ENCODE measurements at regions of chr6 and their contacts with region 1.

Region 1: GRCh38 chr6:135145063-135145800 is 35.9 kb upstream of the MYB start:
- DNase-seq: no peak
- H3K4me3 Mint-ChIP-seq: peak overlapping the region; percentile 55
- H3K27ac Mint-ChIP-seq: peak overlapping the region; percentile 83
- H3K4me1 Mint-ChIP-seq: peaks cover 80% of the 10 kb centered on the region
- H3K27me3 Mint-ChIP-seq: no peaks in the 10 kb centered on the region

Region 2: GRCh38 chr6:135088818-135089809 is 56.1 kb before region 1 on chr6:
- intact Hi-C with region 1: loop called (anchors 1 kb)
- DNase-seq: peak; percentile 58
- H3K4me3 Mint-ChIP-seq: peak overlapping the region; percentile 57
- H3K27ac Mint-ChIP-seq: peak overlapping the region; percentile 93
- H3K4me1 Mint-ChIP-seq: peaks cover 89% of the 10 kb centered on the region
- H3K27me3 Mint-ChIP-seq: no peaks in the 10 kb centered on the region

Region 3: DNA sequence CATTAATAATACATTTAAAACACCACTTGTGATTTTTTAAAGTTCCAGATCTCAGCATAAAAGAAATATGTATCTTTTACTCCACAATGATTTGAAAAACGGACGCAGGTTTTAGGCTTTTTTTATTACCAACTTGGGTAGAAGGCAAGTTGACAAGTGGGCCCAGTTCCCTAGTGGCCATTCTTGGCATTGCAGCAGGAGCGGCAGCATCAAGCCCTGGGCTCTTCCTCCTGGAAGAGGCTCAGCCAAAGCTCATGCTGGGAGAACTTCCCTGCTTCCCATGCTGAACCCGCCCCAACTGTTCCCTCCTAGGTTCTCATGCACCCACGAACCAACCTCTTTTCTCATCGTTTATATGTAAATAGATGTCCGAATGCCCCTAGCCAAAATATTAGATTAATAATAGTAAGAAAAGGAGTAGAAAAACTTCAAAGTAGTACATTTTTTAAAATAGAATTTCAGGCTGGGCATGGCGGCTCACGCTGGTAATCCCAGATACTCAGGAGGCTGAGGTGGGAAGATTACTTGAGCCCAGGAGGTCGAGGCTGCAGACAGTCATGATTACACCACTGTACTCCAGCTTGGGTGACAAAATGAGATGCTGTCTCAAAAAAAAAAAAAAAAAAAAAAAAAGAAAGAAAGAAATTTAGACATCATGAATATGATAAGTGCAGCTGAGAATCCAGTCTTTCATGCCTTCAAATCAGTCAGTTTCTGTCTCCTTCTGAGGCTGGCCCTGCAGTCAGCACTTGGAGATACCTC is 17.6 kb after region 1 on chr6:
- intact Hi-C with region 1: loop called (anchors 1 kb)
- DNase-seq: no peak
- H3K4me3 Mint-ChIP-seq: peak overlapping the region; percentile 53
- H3K27ac Mint-ChIP-seq: peak overlapping the region; percentile 87
- H3K4me1 Mint-ChIP-seq: peaks cover 83% of the 10 kb centered on the region
- H3K27me3 Mint-ChIP-seq: no peaks in the 10 kb centered on the region

Region 4: DNA sequence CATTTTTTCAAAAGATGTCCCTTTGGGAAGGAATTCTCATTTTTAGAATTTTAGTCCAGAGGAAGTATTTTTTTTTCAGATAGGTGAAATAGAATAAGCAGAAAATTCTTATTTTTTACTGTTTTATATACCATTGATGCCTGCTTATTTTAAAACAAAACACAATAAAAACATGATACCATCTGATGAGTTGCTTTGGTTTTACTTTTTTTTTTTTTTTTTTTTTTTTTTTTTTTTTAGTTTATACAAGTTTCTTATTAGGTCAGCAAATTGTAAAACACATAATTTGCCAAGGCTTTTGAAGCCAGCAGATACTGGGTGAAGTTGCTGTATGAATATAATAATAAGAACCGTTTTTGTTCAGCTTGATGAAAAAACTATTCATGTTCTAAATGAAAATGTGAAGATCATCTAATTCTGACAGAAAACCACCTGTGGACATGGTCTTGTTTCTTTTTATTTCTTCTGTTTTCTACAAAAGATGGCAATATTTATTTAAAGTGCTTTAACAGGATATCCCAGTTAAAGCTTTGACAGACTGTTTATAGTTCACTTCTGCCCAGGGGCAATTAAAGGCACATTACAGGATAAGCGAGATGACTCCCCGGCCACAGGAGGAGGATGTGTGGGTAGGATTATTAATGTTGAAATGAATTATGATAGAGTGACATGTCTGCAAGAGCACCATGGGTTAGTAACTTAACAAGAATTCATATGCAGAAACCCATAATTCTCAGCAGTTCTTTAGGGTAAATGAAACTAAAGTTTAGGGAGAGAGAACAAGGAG is 67.0 kb after region 1 on chr6:
- intact Hi-C with region 1: loop called (anchors 1 kb)
- DNase-seq: no peak
- H3K4me3 Mint-ChIP-seq: peak overlapping the region; percentile 72
- H3K27ac Mint-ChIP-seq: peak overlapping the region; percentile 90
- H3K4me1 Mint-ChIP-seq: peaks cover 63% of the 10 kb centered on the region
- H3K27me3 Mint-ChIP-seq: no peaks in the 10 kb centered on the region

Region 5: DNA sequence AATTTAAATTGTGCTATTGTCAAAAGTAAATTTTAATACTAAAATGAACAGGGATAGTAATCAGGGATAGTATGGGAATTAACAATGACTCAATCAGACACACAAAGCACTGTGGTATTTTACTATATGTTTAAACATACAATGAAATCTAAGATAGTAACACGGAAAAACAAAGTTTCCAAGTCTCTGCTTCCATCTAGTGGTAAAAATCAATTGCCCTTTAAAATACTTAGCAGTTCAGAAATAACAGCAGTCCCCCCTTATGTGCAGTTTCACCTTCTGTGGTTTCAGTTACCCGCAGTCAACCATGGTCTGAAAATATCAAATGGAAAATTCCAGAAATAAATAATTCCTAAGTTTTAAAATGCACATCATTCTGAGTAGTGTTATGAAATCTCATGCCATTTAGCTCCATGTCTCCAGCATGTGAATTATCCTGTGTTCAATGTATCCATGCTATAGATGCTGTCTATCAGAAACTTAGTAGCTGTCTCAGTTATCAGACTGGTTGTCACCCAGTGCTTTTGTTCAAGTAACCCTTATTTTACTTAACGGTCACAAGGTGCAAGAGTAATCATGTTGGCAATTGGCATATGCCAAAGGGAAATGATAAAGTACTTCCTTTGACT is 293.8 kb after region 1 on chr6:
- intact Hi-C with region 1: loop called (anchors 2 kb)
- DNase-seq: no peak
- H3K4me3 Mint-ChIP-seq: peak overlapping the region; percentile 43
- H3K27ac Mint-ChIP-seq: peak overlapping the region; percentile 67
- H3K4me1 Mint-ChIP-seq: peaks cover 27% of the 10 kb centered on the region
- H3K27me3 Mint-ChIP-seq: no peaks in the 10 kb centered on the region

Measured in activated T-helper 1 cell treated with anti-CD3 and anti-CD28 coated beads, Interleukin-12 subunit alpha, Interleukin-12 subunit beta, Interleukin-2, Interleukin-4 antibody, amounts not matched to agents 30 ng/mL and 10 ng/mL and 1 ng/mL, durations not matched to agents 14 hours and 24 hours and 36 hours (primary cell).